ENCODE measurements at regions of chr11 and their contacts with region 1.

Region 1: GRCh38 chr11:117232092-117232878 is at the start of gene RNF214:
- DNase-seq: peak; percentile 70
- H3K4me3 ChIP-seq: peak within 1 kb of the TSS; percentile 91 to 97 (median 94)
- H3K27ac ChIP-seq: peak within 1 kb of the TSS; percentile 80
- H3K4me1 ChIP-seq: peaks cover 22% of the 10 kb centered on the region
- H3K27me3 ChIP-seq: no peaks in the 10 kb centered on the region
- CTCF ChIP-seq: peak; percentile 56 to 71
- total RNA-seq, gene RNF214: 10.3 to 22.4 TPM

Region 2: DNA sequence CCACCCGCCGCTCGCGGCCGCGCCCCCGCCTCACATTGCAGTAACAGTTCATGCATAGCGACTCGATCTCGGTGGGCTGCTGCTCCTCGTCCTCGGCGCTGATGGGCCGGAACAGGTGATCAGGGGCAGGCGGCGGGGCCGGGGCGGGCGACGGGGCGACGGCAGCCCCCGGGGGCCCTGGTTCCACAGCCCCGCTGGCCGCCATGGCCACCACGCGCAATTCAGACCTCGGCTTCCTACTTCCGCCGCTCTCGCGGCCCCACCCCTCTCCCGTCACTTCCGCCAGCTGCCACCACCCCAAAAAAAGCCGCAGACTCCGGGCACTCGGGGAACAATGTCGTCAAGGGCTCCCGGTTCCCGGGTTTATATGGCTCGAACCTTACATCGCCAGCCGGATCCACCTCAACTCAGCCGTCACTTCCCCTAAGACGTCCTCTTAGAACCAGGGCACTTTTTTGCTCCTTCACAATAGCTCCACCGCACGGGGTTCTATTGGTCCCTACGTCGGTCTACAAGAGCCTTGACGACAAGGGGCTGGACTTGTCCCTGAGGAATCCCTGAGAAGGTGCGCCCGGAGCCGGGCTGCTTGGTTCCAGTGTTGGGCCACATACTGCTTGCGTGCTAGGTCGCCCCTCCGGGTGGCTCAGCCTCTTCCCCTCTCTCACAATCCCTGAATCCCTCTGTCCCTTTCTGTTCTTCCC is 444.3 kb before region 1 on chr11 and contains the start of gene ZPR1:
- CTCF ChIA-PET with region 1: no interaction called
- dilution Hi-C with region 1: no loop called
- in situ Hi-C with region 1: no loop called
- intact Hi-C with region 1: loop called (anchors 2 kb)
- DNase-seq: peak; percentile 55
- H3K4me3 ChIP-seq: peak within 1 kb of the TSS; percentile 61 to 83 (median 81)
- H3K27ac ChIP-seq: peak within 1 kb of the TSS; percentile 75
- H3K4me1 ChIP-seq: peaks cover 14% of the 10 kb centered on the region
- H3K27me3 ChIP-seq: no peaks in the 10 kb centered on the region
- CTCF ChIP-seq: no peak
- total RNA-seq, gene ZPR1: 35.7 to 67.9 TPM

Region 3: DNA sequence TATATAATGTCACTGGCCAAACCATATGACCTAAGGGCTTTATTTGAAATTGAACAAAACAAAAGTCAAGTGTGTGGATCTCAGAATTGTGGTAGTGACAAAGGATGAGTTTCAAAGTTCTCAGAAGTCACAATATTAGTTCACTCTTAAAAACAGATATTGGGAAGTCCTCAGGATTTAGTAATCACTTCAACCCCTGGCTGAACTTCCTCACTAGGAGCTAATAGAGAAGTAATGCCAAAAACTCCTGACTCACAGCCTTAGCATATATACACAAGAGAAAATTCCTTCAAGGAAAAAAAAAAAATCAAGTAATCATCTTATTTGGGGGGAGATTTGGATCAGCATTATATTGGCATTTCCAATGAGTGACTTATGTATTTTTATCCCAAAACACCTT is 319.3 kb before region 1 on chr11:
- CTCF ChIA-PET with region 1: interaction called, 10 read pairs
- dilution Hi-C with region 1: no loop called
- in situ Hi-C with region 1: no loop called
- intact Hi-C with region 1: no loop called
- DNase-seq: peak; percentile 26
- H3K4me3 ChIP-seq: no peak overlapping the region
- H3K27ac ChIP-seq: no peak overlapping the region
- H3K4me1 ChIP-seq: peaks cover 7% of the 10 kb centered on the region
- H3K27me3 ChIP-seq: no peaks in the 10 kb centered on the region
- CTCF ChIP-seq: no peak

Region 4: DNA sequence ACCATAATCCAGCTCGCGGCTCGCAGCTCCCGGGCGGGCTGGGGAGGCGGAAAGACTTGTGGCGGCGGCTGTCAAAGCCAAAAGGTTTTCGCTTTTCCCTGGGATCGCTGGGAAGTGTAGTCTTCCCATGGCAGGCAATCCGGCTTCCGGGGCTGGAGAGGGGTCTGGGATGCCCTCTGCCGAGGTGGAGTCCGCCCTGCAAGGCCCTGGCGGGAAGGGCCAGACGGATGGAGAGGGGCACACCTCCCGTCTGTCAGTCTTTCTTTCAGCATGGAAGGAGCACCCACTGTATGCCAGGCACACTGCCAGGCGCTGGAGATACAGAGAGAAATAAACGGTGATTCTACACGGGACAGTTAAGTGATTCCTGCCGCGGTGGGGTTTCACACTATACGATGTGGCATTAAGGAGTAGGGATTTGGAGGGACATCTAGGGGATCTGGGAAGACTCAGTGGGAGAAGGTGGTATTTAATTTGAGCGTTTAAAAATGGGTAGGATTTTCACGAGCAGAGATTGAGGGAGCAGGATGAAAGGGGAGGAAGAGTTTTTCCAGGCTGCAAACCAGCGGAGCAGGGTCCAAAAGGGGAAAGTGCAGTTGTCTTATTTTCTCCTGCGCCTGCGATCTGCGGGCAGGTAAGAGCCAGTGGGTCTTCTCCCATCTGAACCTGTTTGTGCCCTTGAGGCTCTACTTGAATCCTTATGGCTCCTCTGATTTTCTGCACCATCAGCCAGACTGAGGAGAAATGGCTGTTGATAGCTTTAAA is 84.1 kb after region 1 on chr11 and contains the start of gene BACE1:
- CTCF ChIA-PET with region 1: no interaction called
- dilution Hi-C with region 1: no loop called
- in situ Hi-C with region 1: no loop called
- intact Hi-C with region 1: loop called (anchors 1 kb)
- DNase-seq: peak; percentile 77
- H3K4me3 ChIP-seq: peak within 1 kb of the TSS; percentile 71 to 85 (median 78)
- H3K27ac ChIP-seq: peak within 1 kb of the TSS; percentile 34
- H3K4me1 ChIP-seq: peaks cover 13% of the 10 kb centered on the region
- H3K27me3 ChIP-seq: no peaks in the 10 kb centered on the region
- CTCF ChIP-seq: peak in 1 of 2 donors; percentile 39
- total RNA-seq, gene BACE1: 18.2 to 20.7 TPM

Region 5: GRCh38 chr11:117327567-117328374 is 95.5 kb after region 1 on chr11 and contains the start of gene CEP164:
- CTCF ChIA-PET with region 1: no interaction called
- dilution Hi-C with region 1: no loop called
- in situ Hi-C with region 1: no loop called
- intact Hi-C with region 1: loop called (anchors 1 kb)
- DNase-seq: peak; percentile 96
- H3K4me3 ChIP-seq: peak within 1 kb of the TSS; percentile 75 to 79 (median 77)
- H3K27ac ChIP-seq: peak within 1 kb of the TSS; percentile 88
- H3K4me1 ChIP-seq: peaks cover 8% of the 10 kb centered on the region
- H3K27me3 ChIP-seq: no peaks in the 10 kb centered on the region
- CTCF ChIP-seq: no peak
- total RNA-seq, gene CEP164: 32.3 to 53.9 TPM

Region 6: DNA sequence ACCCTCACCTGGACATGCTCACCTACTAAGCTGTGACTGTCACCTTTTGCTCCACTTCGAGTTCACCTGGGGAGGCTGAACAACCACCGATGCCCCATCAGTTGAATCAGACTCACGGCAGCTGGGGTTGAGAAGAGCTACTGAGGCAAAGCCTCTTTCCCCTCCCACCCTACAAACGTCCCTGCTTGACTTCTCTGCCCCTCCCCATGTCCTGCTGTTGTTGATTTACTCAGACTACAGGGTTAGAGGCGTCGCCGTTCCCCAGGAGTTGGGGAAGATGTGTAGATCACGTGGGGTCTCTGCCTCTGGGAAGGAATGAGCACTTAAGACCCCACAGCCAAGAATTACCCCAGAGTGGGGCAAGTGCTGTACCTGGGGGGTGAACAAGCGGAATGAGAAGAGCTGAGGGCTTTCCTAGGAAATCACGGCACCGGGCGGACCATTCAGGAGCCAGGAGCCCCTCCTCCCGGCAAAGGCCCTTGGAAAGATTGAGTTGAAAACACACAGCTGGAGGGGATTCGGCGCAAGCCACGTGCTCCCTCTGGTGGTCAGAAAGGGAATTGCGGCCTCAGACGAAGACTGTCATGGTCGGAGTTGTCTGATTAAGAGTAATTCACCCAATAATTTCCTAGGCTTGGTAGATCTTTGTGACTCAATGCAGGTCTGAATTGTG is 585.2 kb after region 1 on chr11:
- CTCF ChIA-PET with region 1: no interaction called
- dilution Hi-C with region 1: no loop called
- in situ Hi-C with region 1: no loop called
- intact Hi-C with region 1: loop called (anchors 5 kb)
- DNase-seq: peak; percentile 63
- H3K4me3 ChIP-seq: no peak overlapping the region
- H3K27ac ChIP-seq: no peak overlapping the region
- H3K4me1 ChIP-seq: peaks cover 10% of the 10 kb centered on the region
- H3K27me3 ChIP-seq: no peaks in the 10 kb centered on the region
- CTCF ChIP-seq: peak; percentile 99 to 100

Measured in mammary epithelial cell (primary cell).